H1 (cell line): ENCODE measurements at regions of chr4 and their contacts with region 1.

Region 1: GRCh38 chr4:80365928-80366327 is 30.4 kb downstream of the CFAP299 start:
- DNase-seq: peak in 1 of 2 experiments; percentile 60
- H3K4me3 ChIP-seq: no peak overlapping the region
- H3K27ac ChIP-seq: no peak overlapping the region
- H3K4me1 ChIP-seq: peaks cover 0 to 1% (median 0%) of the 10 kb centered on the region in 4 experiments; a peak in 2 of 7 replicates
- H3K27me3 ChIP-seq: no peaks in the 10 kb centered on the region
- CTCF ChIP-seq: peak; percentile 23 to 87 (median 70)
- EP300 ChIP-seq: no peak
- POLR2A ChIP-seq: no peak
- RAD21 ChIP-seq: peak; percentile 89 to 94

Region 2: DNA sequence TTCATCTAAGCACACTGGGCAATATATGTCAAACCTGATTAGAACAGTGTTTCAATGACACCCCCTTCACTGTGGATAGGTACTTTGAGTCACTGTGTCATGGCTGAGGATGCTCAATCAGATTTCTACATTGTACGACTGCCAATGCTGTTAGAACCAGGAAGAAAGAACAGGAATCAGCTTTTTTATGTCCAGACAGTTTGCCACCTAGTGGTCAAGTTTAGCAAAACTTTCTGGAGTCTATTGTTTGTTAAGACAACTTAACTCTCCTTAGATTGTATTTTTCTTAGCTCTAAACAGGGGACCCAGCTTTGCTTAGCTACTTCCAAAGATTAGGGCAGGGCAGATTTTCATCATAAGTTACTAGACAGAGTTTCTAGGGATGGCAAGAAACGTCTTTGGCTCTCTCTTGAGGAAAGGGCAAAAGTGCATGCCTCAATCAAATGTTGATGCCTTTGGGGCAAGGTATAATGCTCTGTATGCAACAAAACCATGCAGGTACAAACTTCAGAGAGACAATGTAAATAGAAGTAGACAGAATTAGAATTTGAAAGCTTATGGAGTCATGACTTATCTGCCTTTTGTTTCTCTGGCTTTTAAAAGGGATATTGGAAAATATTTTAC is 624.1 kb after region 1 on chr4:
- CTCF ChIA-PET with region 1: interaction called, 16 read pairs
- POLR2A ChIA-PET with region 1: no interaction called
- DNase-seq: peak; percentile 15 to 43
- H3K4me3 ChIP-seq: no peak overlapping the region
- H3K27ac ChIP-seq: no peak overlapping the region
- H3K4me1 ChIP-seq: peaks cover 0 to 3% (median under 1%) of the 10 kb centered on the region in 4 experiments; a peak in 1 of 7 replicates
- H3K27me3 ChIP-seq: no peaks in the 10 kb centered on the region
- CTCF ChIP-seq: peak in 2 of 3 experiments; percentile 48 to 72; a peak in 2 of 4 replicates
- EP300 ChIP-seq: no peak
- POLR2A ChIP-seq: no peak
- RAD21 ChIP-seq: peak; percentile 64 to 66

Region 3: DNA sequence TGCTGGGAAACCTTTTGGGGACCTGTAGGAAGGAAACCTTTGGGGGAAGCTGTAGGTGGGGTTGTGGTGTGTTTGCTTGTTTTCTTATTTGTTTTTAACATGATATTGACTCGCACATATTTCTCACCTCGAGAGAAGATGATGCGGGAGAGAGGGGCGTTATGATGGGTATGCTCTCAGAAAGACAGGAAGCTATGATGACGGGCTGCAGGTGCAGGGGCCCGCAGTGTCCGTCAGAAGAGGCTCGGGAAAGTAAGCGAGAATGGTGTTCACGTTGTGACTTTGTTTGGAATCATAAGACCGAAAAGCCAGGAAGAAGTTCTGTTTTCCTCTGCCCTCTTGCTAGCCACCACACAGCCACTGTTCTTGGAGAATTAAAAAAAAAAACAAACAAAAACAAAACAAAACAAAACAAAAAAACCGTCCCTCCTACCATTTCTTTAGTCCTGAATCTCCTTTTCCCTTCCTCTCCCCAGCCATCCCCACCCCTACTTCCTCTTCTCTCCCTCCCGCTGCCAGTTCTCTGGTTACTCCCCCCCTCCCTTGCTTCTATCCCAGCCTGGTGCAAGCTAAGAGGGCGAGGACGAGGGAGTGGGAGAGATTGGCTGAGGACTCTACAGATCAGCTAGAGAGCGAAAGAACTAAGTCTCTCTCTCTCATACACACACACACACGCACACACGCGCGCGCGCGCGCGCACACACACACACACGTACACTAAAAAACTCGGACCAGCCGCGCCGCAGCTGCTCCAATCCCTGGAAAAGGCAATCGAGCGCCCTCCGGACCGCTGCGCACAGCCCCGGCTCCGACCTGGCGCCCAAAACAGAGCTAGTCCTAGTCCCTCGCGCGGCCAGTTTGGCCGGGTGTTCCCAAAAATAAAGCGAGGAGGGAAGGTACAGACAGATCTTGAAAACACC is 664.4 kb after region 1 on chr4 and contains the start of gene BMP3:
- CTCF ChIA-PET with region 1: interaction called, 48 read pairs
- POLR2A ChIA-PET with region 1: no interaction called
- DNase-seq: peak in 1 of 2 experiments; percentile 73
- H3K4me3 ChIP-seq: peak within 1 kb of the TSS; percentile 31 to 77 (median 63)
- H3K27ac ChIP-seq: no peak within 1 kb of the TSS
- H3K4me1 ChIP-seq: peaks cover 0 to 6% (median 2%) of the 10 kb centered on the region in 4 experiments; a peak in 4 of 7 replicates
- H3K27me3 ChIP-seq: peaks cover 5 to 41% (median 31%) of the 10 kb centered on the region in 4 experiments
- CTCF ChIP-seq: no peak
- EP300 ChIP-seq: no peak
- POLR2A ChIP-seq: no peak
- RAD21 ChIP-seq: no peak
- total RNA-seq, gene BMP3: 0.06 TPM in 1 of 2 replicates, not detected in the other

Region 4: DNA sequence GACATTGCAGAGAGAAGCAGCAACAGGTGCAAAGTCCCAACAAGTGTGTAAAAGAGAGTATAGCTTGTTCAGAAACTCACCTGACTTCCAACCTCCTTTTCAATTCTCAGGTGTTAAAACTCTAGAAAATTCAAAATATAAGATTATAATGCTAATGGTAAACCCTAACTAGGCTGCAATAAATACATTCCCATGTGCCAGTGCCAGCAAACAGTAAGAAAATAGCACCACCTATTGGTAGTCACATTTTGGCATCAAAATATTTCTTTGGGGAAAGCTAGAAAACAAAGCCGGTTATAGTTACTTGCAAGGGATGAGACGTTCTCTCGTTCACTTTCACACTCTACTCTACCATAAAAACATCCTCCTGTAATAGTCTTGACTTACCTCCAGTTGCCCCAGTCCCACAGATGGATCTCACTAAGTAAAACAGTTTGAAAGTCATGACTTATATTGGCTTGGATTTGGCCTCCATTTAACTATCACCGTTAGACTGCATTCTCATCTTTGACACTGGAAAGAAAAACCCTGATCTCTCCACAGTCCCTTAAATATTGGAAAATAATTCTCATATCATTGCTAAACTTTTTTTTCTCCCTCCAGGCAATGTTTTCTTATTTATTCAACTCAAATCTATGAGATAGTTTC is 674.2 kb after region 1 on chr4:
- CTCF ChIA-PET with region 1: interaction called, 73 read pairs
- POLR2A ChIA-PET with region 1: no interaction called
- DNase-seq: no peak
- H3K4me3 ChIP-seq: no peak overlapping the region
- H3K27ac ChIP-seq: no peak overlapping the region
- H3K4me1 ChIP-seq: peaks cover 0 to 2% (median 0%) of the 10 kb centered on the region in 4 experiments; a peak in 1 of 7 replicates
- H3K27me3 ChIP-seq: no peaks in the 10 kb centered on the region
- CTCF ChIP-seq: peak in 2 of 3 experiments; percentile 64 to 65; a peak in 2 of 4 replicates
- EP300 ChIP-seq: no peak
- POLR2A ChIP-seq: no peak
- RAD21 ChIP-seq: peak; percentile 86 to 89

Region 5: GRCh38 chr4:81052119-81053068 is 686.5 kb after region 1 on chr4:
- CTCF ChIA-PET with region 1: interaction called, 58 read pairs
- POLR2A ChIA-PET with region 1: no interaction called
- DNase-seq: peak; percentile 44 to 89
- H3K4me3 ChIP-seq: no peak overlapping the region
- H3K27ac ChIP-seq: no peak overlapping the region
- H3K4me1 ChIP-seq: no peaks in the 10 kb centered on the region
- H3K27me3 ChIP-seq: no peaks in the 10 kb centered on the region
- CTCF ChIP-seq: peak; percentile 44 to 75 (median 74)
- EP300 ChIP-seq: no peak
- POLR2A ChIP-seq: no peak
- RAD21 ChIP-seq: peak; percentile 93 to 96